Keratinocyte (primary cell): ENCODE measurements at regions of chr6 and their contacts with region 1.

Region 1: GRCh38 chr6:129251669-129252376 is 368.9 kb downstream of the LAMA2 start:
- DNase-seq: peak; percentile 17
- H3K4me3 ChIP-seq: no peak overlapping the region
- H3K27ac ChIP-seq: no peak overlapping the region
- H3K4me1 ChIP-seq: no peaks in the 10 kb centered on the region
- H3K27me3 ChIP-seq: peaks cover 2% of the 10 kb centered on the region
- CTCF ChIP-seq: peak; percentile 67 to 85 (median 80)

Region 2: GRCh38 chr6:128807577-128807976 is 444.2 kb before region 1 on chr6:
- dilution Hi-C with region 1: loop called (anchors 25 kb)
- DNase-seq: no peak
- H3K4me3 ChIP-seq: no peak overlapping the region
- H3K27ac ChIP-seq: no peak overlapping the region
- H3K4me1 ChIP-seq: no peaks in the 10 kb centered on the region
- H3K27me3 ChIP-seq: no peaks in the 10 kb centered on the region
- CTCF ChIP-seq: peak in 1 of 3 experiments; percentile 33

Region 3: DNA sequence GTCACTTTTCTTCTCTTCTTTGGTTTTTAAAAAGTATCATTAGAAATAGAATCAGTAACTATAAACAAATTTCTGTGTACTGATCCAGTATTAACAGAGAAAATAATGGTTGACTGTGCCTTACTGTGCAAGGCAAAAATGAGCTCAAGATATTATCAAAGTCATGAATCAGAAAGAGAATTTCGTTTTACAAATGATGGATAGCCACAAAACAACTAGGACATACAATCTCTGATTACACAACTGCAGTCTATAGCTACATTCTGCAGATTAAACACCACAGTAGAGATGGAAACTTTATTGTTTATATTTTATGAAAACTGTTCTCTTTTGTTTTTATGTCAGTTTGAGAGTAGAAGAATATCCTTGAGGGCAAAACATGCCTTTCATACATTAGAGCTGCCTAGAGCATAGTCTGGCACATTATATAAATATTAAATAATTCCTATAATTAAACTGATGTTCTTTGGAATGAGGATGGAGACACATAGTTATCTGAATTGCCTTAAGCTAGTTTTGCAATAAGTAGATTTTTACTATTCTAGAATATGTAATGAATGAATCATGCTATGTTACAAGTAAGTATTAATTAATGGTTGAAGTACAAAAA is 35.8 kb before region 1 on chr6:
- dilution Hi-C with region 1: no loop called
- DNase-seq: no peak
- H3K4me3 ChIP-seq: no peak overlapping the region
- H3K27ac ChIP-seq: no peak overlapping the region
- H3K4me1 ChIP-seq: no peaks in the 10 kb centered on the region
- H3K27me3 ChIP-seq: no peaks in the 10 kb centered on the region
- CTCF ChIP-seq: no peak